HEK293T (cell line): ENCODE measurements at regions of chr17 and their contacts with region 1.

Region 1: DNA sequence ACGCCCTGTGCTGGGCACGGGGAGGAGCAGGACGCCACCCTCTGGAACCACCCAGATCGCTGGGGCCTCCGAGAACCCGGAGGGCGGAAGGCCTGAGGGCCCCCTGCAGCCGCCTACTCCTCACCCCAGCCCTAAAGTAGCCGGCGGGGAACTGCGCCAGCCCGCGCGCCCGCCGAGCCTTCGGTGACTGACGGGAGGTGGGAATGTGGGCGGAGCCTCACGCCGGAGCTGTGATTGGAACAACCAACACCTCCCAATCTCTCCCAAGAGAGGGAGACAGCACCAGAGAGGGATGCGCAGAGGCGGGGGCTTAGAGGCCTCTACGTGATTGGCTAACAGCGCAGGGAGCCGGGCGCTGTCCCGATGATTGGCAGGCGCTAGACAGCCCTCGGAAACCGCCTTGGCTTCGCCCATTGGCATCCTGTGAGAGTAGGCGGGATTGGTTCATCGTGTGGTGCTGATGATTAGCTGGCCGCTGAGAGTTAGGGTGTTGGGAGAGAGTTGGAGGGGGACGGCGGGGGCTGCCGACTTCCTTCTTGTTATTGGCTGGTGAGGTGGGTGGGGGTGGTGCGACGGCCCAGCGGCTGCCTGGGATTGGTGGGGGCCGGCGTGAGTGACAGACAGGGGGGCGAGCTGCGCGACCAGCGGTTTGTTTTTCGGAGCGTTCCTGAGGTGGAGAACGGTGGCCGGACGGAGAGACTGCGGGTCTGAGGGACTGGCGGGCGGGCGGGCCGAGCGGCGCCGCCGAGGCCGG is at the start of gene MAP3K3:
- DNase-seq: peak; percentile 99

Region 2: GRCh38 chr17:63600569-63601438 is 21.1 kb before region 1 on chr17 and contains the start of gene TACO1:
- CTCF ChIA-PET with region 1: interaction called, 4 read pairs
- POLR2A ChIA-PET with region 1: interaction called, 15 read pairs
- DNase-seq: peak; percentile 90

Region 3: GRCh38 chr17:63634163-63634562 is 12.2 kb after region 1 on chr17:
- CTCF ChIA-PET with region 1: interaction called, 3 read pairs
- POLR2A ChIA-PET with region 1: interaction called, 12 read pairs
- DNase-seq: no peak

Region 4: GRCh38 chr17:63646488-63646806 is 24.5 kb after region 1 on chr17:
- CTCF ChIA-PET with region 1: no interaction called
- POLR2A ChIA-PET with region 1: no interaction called
- DNase-seq: no peak

Region 5: DNA sequence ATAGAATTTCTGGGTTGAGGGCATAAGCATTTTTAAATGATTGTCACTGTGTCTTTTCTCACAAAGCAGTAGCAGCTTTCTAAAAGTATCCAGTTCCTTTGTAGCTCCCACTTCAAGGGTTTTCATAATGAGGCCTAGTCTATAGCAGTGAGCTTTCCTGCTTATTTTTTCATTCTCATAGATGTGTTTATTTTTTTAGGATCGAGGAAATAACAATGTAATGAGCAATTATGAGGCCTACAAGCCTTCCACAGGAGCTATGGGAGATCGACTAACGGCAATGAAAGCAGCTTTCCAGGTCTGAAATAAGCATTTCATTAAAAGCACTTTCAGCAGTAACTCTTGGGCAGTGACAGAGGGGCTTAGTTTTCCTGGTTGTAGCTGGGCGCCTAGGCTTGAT is 194.7 kb after region 1 on chr17:
- CTCF ChIA-PET with region 1: no interaction called
- POLR2A ChIA-PET with region 1: no interaction called
- DNase-seq: no peak